Common myeloid progenitor, CD34-positive (primary cell): ENCODE measurements at regions of chr2 and their contacts with region 1.

Region 1: DNA sequence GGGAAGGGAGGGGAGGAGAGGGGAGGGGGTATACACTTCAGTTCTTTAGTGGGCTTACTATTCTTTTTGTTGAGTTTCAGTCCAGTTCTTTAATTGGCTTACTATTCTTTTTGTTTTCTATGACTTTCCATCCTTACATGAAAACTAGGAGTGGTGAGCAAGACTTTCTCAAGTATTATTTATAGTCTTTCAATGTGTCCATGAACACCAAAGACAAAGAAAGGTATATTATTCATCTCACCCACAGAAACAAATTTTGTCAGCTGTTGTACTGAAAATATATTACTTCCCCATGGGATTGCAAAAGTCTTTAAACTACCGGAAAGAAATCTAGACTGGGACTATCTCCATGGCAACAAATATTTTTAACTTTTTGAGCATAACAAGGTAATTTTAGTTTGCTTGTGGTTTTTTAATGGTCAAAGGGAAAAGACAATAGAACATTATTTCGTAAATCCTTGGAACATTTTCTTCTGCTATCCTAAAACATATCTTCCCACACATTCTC is 17.6 kb downstream of the ADAM17 start:
- DNase-seq: peak; percentile 74 to 83 (median 77)
- H3K4me3 ChIP-seq: peak overlapping the region in 3 of 7 experiments; percentile 39 to 57 (median 48)
- H3K27ac ChIP-seq: peak overlapping the region; percentile 83 to 93
- H3K4me1 ChIP-seq: peaks cover 11 to 46% (median 33%) of the 10 kb centered on the region in 4 experiments
- H3K27me3 ChIP-seq: no peaks in the 10 kb centered on the region

Region 2: DNA sequence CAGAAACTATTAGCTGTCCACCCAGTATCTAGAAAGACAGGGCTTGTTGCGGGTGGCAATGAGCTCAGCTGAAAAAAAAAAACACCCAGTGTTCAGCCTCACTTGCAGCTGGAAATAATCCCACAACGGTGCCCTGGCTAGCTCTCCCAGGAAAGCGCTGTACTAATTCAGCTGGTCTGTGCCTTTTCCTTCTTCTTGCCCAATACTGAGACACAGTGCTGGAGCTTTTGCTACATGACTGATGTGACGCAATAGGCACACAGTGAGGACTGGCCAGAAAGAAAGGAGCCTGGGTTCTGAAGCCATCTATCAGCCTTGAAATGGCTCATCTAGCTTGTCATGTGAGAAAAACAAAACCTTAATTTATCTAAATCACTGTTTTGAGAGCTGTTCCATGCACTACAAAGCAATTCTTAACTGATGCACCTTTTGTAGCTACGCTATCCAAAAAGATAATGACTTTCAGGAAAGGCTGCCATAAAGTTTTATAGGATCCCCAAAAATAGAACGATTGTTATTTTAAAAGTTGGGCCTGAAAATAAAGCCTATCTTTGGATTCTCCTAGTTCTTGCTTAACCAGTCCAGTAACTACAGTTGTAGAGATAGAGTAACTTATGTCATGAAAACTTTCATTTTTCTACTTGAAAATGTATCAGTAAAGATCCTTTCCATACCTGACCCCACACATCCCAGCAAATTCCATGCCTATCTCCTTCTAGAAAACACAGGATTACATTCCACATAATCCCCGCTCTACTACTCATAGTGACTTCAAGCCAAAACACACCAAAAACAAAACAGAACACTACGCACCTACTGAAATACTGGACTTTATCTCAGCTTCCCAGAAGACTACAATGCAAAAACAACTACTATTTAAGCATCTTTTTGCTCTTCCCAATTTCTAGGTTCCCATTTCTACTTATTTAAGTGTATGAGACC is 716.5 kb before region 1 on chr2:
- CTCF ChIA-PET with region 1: no interaction called
- POLR2A ChIA-PET with region 1: no interaction called
- DNase-seq: no peak
- H3K4me3 ChIP-seq: no peak overlapping the region
- H3K27ac ChIP-seq: no peak overlapping the region
- H3K4me1 ChIP-seq: peaks cover 0 to 14% (median 0%) of the 10 kb centered on the region in 4 experiments
- H3K27me3 ChIP-seq: no peaks in the 10 kb centered on the region

Region 3: DNA sequence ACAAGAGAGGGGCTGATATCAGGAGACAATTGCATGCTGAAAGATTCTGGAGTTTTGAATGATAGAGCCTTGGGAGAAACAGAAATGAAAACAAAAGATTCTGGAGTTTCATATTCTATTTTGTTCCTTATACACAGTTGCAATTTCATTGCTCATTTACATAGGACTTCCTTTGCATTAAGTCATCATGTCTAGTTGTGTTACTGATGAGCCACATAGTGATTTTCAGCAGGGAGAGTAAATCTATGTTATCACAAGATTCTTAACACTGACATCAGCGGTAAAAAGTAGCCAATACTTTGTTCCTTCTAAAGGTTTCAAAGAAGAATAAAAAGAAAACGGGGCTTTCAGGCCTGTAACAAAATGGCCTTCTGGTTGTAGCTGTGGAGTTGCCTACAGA is 10.5 kb after region 1 on chr2:
- CTCF ChIA-PET with region 1: interaction called, 17 read pairs
- POLR2A ChIA-PET with region 1: interaction called, 25 read pairs
- DNase-seq: peak in 1 of 3 donors; percentile 36
- H3K4me3 ChIP-seq: peak overlapping the region in 2 of 7 experiments; percentile 25 to 33
- H3K27ac ChIP-seq: peak overlapping the region in 1 of 2 experiments; percentile 52
- H3K4me1 ChIP-seq: peaks cover 25 to 55% (median 39%) of the 10 kb centered on the region in 4 experiments
- H3K27me3 ChIP-seq: no peaks in the 10 kb centered on the region

Region 4: DNA sequence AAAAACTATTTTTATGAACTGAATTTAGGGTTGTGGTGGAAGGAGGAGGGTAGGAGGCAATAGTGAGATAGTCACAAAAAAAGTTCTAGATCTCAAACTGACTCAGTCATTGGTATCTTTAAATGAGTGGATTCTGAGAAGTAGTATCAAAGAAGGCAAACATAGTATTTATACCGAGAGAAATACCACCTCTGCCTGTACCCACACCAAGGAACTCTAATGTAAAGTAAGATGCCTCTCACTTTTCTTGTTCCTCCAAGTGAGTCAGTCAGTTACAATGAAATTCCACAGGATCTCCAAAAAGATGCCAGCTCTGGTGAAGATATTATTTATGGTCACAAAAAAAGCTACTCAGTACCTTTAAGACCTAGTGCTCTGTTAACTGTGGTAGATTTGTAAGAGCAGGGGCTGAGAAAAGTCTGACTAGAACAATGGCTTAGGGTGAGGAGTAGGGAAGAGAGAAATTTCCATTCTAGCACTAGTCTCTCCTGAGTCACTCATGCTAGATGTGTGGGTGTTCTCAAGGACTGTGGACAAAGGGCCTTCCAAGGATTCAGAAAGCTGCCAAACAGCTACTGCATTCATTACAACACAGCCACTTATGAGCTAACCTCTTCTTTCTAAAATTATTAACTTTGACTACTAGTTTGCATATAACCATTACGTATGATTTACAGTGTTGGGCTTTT is 56.5 kb after region 1 on chr2:
- CTCF ChIA-PET with region 1: no interaction called
- POLR2A ChIA-PET with region 1: no interaction called
- DNase-seq: no peak
- H3K4me3 ChIP-seq: no peak overlapping the region
- H3K27ac ChIP-seq: no peak overlapping the region
- H3K4me1 ChIP-seq: peaks cover 0 to 2% (median under 1%) of the 10 kb centered on the region in 4 experiments
- H3K27me3 ChIP-seq: no peaks in the 10 kb centered on the region